Activated CD4-positive, alpha-beta T cell treated with anti-CD3 and anti-CD28 coated beads, Interleukin-2, amount 10 ng/mL, durations not matched to agents 24 days and 14 days (primary cell): ENCODE measurements at regions of chr1 and their contacts with region 1.

Region 1: GRCh38 chr1:18956369-18957135 is at the start of gene IFFO2:
- DNase-seq: peak; percentile 100
- H3K4me3 Mint-ChIP-seq: peak within 1 kb of the TSS; percentile 88
- H3K27ac Mint-ChIP-seq: peak within 1 kb of the TSS; percentile 87
- H3K4me1 Mint-ChIP-seq: peaks cover 51% of the 10 kb centered on the region
- H3K27me3 Mint-ChIP-seq: peaks cover 21% of the 10 kb centered on the region
- total RNA-seq, gene IFFO2: 32.3 and 36.8 TPM in 2 replicates

Region 2: DNA sequence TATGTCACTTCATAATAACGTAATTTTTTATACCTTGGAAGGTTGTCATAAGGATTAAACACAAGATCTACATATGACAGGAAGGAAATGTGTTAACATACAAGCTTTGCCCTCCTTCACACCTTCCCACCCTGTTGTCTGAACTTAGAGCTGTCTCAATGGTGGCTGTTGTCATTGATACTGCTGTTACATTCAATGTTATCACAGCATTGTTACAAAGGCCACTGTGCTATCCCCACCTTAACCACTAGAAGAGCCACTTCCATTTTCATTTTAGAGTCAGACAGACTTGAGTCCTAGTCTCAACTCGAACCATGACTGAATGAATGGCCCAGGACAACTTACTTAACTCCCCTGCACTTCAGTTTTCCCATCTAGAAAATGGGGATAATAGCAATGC is 128.3 kb before region 1 on chr1:
- intact Hi-C with region 1: no loop called
- DNase-seq: no peak
- H3K4me3 Mint-ChIP-seq: no peak overlapping the region
- H3K27ac Mint-ChIP-seq: no peak overlapping the region
- H3K4me1 Mint-ChIP-seq: no peaks in the 10 kb centered on the region
- H3K27me3 Mint-ChIP-seq: peaks cover 4% of the 10 kb centered on the region

Region 3: GRCh38 chr1:19010995-19011844 is 54.7 kb after region 1 on chr1:
- intact Hi-C with region 1: loop called (anchors 1 kb)
- DNase-seq: peak; percentile 93
- H3K4me3 Mint-ChIP-seq: peak overlapping the region; percentile 69
- H3K27ac Mint-ChIP-seq: peak overlapping the region; percentile 87
- H3K4me1 Mint-ChIP-seq: peaks cover 27% of the 10 kb centered on the region
- H3K27me3 Mint-ChIP-seq: peaks cover 2% of the 10 kb centered on the region